ENCODE measurements at regions of chr3 and their contacts with region 1.

Region 1: DNA sequence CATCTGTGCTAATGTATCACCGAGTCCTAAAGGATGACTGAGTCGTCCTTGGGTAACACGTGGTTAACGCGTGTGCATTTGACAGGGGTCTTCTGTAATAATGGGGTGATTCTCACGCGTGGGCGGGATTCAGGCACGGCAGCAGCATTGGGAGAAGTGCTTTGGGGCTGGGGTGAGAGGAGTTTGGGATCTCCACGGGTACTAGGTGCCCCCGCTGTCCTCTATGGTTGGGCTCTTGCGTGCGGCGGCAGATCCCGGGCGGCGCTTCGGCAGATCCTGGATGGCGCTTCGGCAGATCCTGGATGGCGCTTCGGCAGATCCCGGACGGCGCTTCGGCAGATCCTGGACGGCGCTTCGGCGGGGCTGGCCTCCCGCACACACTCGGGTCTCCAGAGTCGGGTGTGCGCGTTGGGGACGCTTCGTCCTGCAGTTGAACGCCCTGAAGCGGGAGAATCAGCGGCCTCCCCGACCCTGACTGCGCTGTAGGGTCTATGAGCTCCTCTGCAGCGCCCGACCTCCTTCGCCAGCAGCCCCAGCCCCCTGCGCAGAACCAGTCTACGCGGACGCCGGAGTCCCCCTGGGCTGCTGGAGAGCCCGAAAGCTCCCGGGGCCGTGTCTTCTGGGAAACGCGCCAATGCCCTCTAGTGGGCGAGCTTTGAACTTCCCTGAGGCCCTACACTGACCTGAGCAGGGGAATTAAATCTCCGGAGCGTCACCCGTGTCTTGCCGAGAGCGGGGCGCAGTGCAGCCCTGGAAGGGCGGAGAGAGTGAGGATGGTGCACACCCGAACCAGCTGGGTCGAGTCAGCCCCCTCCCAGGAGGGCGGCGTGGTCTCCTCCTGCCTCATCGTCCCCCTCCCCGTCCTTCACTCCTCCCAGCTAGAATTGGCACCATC is 48.1 kb upstream of the EPHB3 start:
- DNase-seq: peak; percentile 87
- H3K4me3 ChIP-seq: peak overlapping the region; percentile 11 to 49 (median 28)
- H3K27ac ChIP-seq: no peak overlapping the region
- H3K4me1 ChIP-seq: peaks cover 0 to 11% (median 7%) of the 10 kb centered on the region in 4 donors
- H3K27me3 ChIP-seq: peaks cover 81% of the 10 kb centered on the region
- CTCF ChIP-seq: peak; percentile 83 to 91 (median 87)
- EP300 ChIP-seq: no peak
- POLR2A ChIP-seq: no peak

Region 2: DNA sequence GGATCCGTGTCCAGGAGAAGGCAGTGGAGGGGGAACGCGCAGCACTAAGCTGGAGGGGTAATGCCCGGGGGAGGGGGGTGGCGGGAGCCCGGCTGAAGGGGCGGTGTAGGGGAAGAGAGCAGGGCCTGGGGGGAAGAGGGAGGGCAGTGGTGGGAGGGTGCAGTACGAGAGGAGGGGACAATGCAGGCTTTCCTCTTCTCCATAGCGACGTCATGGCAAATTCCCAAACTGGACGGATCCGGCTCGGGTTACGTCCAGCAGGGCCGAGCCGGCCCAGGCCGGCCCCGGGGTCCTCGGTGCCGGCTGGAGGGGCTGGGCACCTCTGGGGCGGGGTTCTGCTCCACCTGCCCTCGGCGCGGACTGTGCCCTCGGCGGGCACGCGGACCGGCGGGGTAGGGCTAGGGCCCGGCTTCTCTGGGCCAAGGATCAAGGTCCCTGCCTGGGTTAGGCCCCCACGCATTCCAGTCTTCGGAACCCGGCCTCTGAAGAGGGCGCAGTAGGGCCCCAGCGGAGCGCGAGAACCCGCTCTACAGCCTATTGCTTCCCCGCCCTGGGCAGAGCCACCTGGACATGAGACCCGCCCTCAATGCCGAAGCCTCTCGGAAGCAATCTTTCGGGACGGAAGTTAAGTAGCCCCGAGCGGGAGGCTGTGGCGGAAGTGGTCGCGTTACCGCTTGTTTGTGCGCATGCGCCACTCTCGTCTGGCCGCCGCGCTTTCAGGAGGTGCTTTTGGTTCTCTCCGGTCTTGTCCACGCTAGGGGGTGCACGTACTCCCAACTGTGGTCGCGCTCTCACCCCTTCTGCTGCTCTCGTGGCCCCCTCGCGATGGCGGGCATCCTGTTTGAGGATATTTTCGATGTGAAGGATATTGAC is 150.6 kb before region 1 on chr3:
- in situ Hi-C with region 1: no loop called
- intact Hi-C with region 1: loop called (anchors 10 kb)
- DNase-seq: peak; percentile 98
- H3K4me3 ChIP-seq: peak overlapping the region; percentile 44 to 95 (median 86)
- H3K27ac ChIP-seq: peak overlapping the region; percentile 94 to 100 (median 97)
- H3K4me1 ChIP-seq: peaks cover 7 to 38% (median 29%) of the 10 kb centered on the region in 4 donors
- H3K27me3 ChIP-seq: no peaks in the 10 kb centered on the region
- CTCF ChIP-seq: peak; percentile 38 to 68 (median 47)
- EP300 ChIP-seq: peak; percentile 66
- POLR2A ChIP-seq: peak; percentile 80

Measured in transverse colon (tissue), 4 donors.